ENCODE measurements at regions of chr17 and their contacts with region 1.

Region 1: GRCh38 chr17:28902819-28903545 is at the start of gene DHRS13:
- DNase-seq: peak; percentile 93
- H3K4me3 ChIP-seq: peak within 1 kb of the TSS; percentile 48 to 73 (median 59)
- H3K27ac ChIP-seq: peak within 1 kb of the TSS; percentile 14
- H3K4me1 ChIP-seq: peaks cover 16% of the 10 kb centered on the region
- H3K27me3 ChIP-seq: no peaks in the 10 kb centered on the region
- CTCF ChIP-seq: peak; percentile 79 to 85
- total RNA-seq, gene DHRS13: 2.3 to 7.3 TPM

Region 2: DNA sequence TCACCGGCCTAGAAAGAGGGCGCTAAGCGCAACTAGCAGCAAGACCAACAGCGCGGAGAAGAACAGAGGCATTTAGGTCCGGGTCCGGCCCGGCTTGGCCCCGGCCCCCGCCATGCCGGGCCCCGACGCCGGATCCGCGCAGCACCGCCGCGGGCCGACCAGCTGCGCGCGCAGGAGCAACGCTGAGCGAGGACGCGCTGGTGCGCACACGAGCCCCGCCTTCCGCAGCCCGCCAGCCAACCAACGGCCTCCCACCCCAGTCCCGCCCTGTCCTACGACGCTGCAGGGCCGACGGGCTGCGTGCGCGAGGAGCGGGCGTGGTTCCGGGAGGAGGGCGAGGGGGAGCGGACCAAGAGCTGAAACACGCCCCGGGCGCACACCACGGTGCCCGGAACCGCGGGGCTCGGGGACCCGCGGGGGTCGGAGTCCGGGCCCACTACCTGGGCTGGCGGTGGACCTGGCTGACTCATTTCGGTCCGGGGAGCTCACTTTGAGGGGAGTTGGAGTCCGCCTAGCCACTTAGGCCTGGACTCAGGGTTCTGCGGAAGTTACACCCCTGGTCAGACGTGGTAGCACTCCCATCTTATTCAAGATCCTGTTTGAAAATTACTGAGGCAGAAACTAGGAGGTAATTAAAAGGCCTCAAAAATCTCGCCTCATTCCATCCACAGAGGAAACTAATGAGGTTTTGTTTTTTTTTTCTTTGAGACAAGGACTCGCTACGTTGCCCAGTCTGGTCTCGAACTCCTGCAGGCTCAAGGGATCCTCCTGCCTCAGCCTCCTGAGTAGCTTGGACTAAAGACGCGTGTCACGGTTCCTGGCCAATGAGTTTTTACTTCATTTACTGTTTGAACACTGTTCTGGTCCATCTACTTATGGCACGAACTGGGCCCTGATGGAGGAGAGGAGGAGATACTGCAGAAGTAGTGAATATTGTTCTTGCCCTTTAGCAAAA is 257.7 kb before region 1 on chr17 and contains the start of gene BLTP2:
- CTCF ChIA-PET with region 1: interaction called, 3 read pairs
- dilution Hi-C with region 1: no loop called
- in situ Hi-C with region 1: no loop called
- intact Hi-C with region 1: loop called (anchors 10 kb)
- DNase-seq: peak; percentile 93
- H3K4me3 ChIP-seq: peak within 1 kb of the TSS; percentile 73 to 91 (median 76)
- H3K27ac ChIP-seq: peak within 1 kb of the TSS; percentile 73
- H3K4me1 ChIP-seq: peaks cover 17% of the 10 kb centered on the region
- H3K27me3 ChIP-seq: no peaks in the 10 kb centered on the region
- CTCF ChIP-seq: no peak
- total RNA-seq, gene BLTP2: 117 to 124 TPM

Region 3: DNA sequence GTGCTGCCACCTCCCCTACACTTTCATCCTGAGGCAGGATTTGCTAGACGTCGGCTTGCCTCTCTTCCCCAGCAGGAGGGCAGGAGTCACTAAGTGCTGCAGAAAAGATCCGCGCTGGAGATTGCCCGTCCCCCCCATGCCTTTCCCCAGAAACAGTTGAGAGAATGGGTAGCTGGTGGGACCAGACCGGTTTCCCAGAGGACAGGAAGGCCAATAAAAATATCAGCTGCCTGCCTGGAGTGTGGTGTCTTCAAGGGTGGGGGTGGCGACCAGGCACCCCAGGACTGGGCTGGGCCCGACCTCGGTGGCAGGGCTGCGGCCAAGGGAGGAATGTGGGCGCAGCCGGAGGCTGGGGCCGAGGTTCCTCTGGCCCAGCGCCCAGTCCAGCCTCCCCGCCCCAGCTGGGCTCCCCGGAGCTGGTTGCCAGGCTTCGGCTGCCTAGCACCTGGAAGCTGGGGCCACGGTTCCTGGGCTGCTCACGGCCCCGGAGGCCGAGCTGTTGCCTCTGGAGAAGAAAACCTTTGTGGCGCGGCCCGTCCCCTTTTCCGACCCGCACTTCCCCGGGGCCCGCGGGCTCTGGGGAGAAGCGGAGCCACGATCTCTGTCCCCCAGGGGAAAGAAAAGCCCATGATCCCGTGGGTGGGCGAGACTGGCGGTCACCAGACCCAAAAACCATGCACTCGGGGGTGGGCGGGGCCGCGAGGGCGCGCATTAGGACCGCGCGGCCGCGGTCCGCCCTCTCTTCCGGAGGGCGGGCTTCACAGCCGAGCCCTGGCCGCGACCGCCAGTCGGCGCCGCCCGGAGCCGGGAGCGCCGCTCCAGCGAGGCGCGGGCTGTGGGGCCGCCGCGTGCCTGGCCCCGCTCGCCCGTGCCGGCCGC is 159.5 kb before region 1 on chr17 and contains the start of gene TRAF4:
- CTCF ChIA-PET with region 1: no interaction called
- dilution Hi-C with region 1: no loop called
- in situ Hi-C with region 1: no loop called
- intact Hi-C with region 1: loop called (anchors 1 kb)
- DNase-seq: peak; percentile 98
- H3K4me3 ChIP-seq: peak within 1 kb of the TSS; percentile 88 to 96 (median 91)
- H3K27ac ChIP-seq: peak within 1 kb of the TSS; percentile 98
- H3K4me1 ChIP-seq: peaks cover 29% of the 10 kb centered on the region
- H3K27me3 ChIP-seq: no peaks in the 10 kb centered on the region
- CTCF ChIP-seq: peak in 1 of 2 donors; percentile 18
- total RNA-seq, gene TRAF4: 50.5 to 147 TPM

Region 4: GRCh38 chr17:28750178-28751047 is 152.6 kb before region 1 on chr17:
- CTCF ChIA-PET with region 1: no interaction called
- dilution Hi-C with region 1: no loop called
- in situ Hi-C with region 1: loop called in 1 of 2 experiments (anchors 10 kb)
- intact Hi-C with region 1: no loop called
- DNase-seq: peak; percentile 84
- H3K4me3 ChIP-seq: no peak overlapping the region
- H3K27ac ChIP-seq: no peak overlapping the region
- H3K4me1 ChIP-seq: peaks cover 29% of the 10 kb centered on the region
- H3K27me3 ChIP-seq: no peaks in the 10 kb centered on the region
- CTCF ChIP-seq: peak; percentile 100

Region 5: GRCh38 chr17:28812091-28812747 is 90.8 kb before region 1 on chr17:
- CTCF ChIA-PET with region 1: interaction called, 4 read pairs
- dilution Hi-C with region 1: no loop called
- in situ Hi-C with region 1: no loop called
- intact Hi-C with region 1: loop called (anchors 2 kb)
- DNase-seq: peak; percentile 97
- H3K4me3 ChIP-seq: peak overlapping the region; percentile 75 to 97 (median 97)
- H3K27ac ChIP-seq: peak overlapping the region; percentile 99
- H3K4me1 ChIP-seq: peaks cover 34% of the 10 kb centered on the region
- H3K27me3 ChIP-seq: no peaks in the 10 kb centered on the region
- CTCF ChIP-seq: no peak

Region 6: GRCh38 chr17:28865946-28866752 is 36.8 kb before region 1 on chr17:
- CTCF ChIA-PET with region 1: no interaction called
- dilution Hi-C with region 1: loop called (anchors 5 kb)
- in situ Hi-C with region 1: no loop called
- intact Hi-C with region 1: no loop called
- DNase-seq: no peak
- H3K4me3 ChIP-seq: no peak overlapping the region
- H3K27ac ChIP-seq: no peak overlapping the region
- H3K4me1 ChIP-seq: no peaks in the 10 kb centered on the region
- H3K27me3 ChIP-seq: no peaks in the 10 kb centered on the region
- CTCF ChIP-seq: no peak

Region 7: DNA sequence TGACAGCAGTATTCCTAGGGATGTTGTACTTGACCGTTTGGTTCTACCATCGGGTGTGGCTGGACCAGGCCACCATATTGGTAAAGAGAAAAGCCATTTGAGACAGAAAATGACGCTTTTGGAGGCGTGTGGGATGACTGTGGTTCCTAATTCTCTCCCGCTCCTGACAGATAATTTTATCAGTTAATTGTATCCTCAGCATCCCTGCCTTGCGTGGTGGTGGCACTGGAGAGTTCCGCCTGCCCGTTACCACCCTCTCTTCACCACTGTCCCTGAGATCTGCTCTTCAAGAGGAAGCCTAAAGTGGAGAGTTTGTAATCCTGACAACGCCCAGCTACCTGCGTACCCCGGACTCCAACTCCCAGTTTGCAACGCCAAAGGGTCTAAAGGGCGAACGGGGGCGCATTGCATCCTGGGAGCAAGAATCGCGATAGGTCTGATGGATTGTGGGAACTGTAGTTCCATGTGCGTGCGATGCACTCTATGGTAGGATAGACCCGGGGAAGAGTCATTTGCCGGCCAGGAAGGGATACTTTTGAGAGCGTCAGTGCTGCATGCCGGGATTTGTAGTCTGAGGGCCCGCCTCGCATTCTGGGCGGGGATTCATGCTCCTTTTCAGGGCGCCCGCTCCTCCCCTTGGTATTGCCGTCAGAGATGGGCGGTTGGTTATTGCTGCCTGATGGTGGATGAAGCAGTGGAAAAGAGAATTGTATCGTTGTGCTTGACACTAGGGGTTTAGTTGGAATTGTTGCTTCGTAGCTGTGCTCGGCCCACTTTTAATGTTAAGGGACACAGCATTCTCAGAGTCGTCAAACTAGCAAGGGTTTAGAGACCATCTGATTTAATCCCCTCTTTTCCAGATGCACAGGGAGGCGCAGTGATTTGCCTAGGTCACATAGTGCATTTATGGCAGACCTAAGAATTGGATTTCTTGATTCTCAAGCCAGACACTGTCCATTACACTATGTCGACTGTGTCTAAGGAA is 49.3 kb after region 1 on chr17:
- CTCF ChIA-PET with region 1: no interaction called
- dilution Hi-C with region 1: no loop called
- in situ Hi-C with region 1: no loop called
- intact Hi-C with region 1: loop called (anchors 1 kb)
- DNase-seq: peak; percentile 99
- H3K4me3 ChIP-seq: peak overlapping the region; percentile 64 to 80 (median 72)
- H3K27ac ChIP-seq: peak overlapping the region; percentile 91
- H3K4me1 ChIP-seq: peaks cover 11% of the 10 kb centered on the region
- H3K27me3 ChIP-seq: no peaks in the 10 kb centered on the region
- CTCF ChIP-seq: no peak

Measured in mammary epithelial cell (primary cell).